ENCODE measurements at regions of chr15 and their contacts with region 1.

Region 1: DNA sequence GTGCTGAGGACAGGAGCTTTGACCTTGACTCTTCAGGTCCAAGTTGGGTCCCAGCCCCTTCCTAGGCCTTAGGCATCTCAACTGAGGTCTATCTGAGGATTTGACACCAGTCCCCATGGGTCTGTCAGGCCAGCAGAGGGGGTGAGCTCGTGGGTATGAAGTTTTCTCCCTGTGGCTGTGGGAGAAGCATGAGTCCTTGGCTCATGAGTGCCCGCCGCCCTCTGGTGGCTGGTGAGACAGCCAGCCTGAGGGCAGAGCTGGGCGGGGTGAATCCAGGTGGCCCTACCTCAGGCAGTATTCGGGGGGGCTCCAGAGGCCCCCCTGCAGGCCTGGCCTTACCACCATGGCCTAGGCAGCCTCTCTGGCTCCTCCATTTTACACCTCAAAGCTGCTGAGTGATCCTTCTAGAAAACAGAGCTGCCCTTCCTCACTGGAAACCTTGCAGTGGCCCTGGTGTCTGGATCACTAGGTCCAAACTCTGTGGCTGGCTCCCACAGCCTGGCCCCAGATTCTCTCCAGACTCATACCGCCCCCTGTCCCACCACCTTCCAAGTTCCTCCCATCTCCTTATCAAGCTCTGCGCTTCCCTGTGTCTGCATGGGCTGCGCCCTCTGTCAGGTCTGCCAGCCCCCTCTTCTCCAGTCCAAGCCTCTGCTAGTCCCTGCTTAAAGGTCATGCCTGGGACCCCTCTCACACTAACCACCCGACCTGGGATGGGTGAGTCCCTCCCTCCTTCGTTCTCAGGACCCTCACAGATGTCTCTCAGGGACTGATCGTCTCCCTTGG is 16.1 kb downstream of the SH2D7 start:
- DNase-seq: peak; percentile 94
- H3K4me3 Mint-ChIP-seq: no peak overlapping the region
- H3K27ac Mint-ChIP-seq: no peak overlapping the region
- H3K4me1 Mint-ChIP-seq: peaks cover 53% of the 10 kb centered on the region
- H3K27me3 Mint-ChIP-seq: no peaks in the 10 kb centered on the region

Region 2: GRCh38 chr15:77901974-77902750 is 206.3 kb before region 1 on chr15:
- intact Hi-C with region 1: no loop called
- DNase-seq: no peak
- H3K4me3 Mint-ChIP-seq: no peak overlapping the region
- H3K27ac Mint-ChIP-seq: no peak overlapping the region
- H3K4me1 Mint-ChIP-seq: no peaks in the 10 kb centered on the region
- H3K27me3 Mint-ChIP-seq: no peaks in the 10 kb centered on the region

Region 3: DNA sequence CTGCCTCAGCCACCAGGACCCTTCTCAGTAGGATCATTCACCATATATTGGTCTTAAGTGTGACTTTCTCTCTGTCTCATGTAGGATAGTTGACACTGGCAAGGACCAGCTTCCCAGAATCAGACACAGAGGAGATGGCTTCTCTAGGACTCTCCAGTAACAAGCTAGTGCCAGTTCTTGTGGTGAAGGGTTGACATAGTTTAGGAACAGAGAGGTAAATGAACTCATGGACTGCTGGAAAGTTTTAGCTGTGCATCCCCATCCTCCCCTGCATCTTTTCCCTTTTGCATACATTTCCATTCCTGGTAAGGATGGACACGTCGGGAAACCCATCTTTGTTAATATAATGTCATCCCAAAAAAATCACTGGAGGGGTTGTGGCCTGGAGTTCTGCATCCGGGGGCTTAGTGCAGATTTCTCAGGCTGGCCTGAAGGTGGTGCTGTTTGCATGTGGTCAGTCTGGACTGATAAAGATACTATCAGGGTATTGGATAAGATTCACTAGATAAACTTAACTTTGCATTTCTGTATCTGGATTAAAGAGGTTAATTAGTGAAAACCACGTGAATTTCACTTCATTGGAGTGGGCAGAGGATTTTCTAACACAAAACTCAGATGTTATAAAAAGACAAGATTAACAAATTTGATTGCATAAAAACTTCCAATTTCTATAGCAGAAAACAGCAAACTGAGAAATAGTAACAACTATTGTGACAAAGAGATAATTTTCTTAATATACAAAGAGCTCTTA is 141.8 kb before region 1 on chr15:
- intact Hi-C with region 1: loop called (anchors 1 kb)
- DNase-seq: peak; percentile 86
- H3K4me3 Mint-ChIP-seq: no peak overlapping the region
- H3K27ac Mint-ChIP-seq: peak overlapping the region; percentile 12
- H3K4me1 Mint-ChIP-seq: peaks cover 4% of the 10 kb centered on the region
- H3K27me3 Mint-ChIP-seq: peaks cover 45% of the 10 kb centered on the region

Region 4: GRCh38 chr15:77983708-77984445 is 124.6 kb before region 1 on chr15:
- intact Hi-C with region 1: no loop called
- DNase-seq: no peak
- H3K4me3 Mint-ChIP-seq: no peak overlapping the region
- H3K27ac Mint-ChIP-seq: no peak overlapping the region
- H3K4me1 Mint-ChIP-seq: no peaks in the 10 kb centered on the region
- H3K27me3 Mint-ChIP-seq: peaks cover 4% of the 10 kb centered on the region

Region 5: DNA sequence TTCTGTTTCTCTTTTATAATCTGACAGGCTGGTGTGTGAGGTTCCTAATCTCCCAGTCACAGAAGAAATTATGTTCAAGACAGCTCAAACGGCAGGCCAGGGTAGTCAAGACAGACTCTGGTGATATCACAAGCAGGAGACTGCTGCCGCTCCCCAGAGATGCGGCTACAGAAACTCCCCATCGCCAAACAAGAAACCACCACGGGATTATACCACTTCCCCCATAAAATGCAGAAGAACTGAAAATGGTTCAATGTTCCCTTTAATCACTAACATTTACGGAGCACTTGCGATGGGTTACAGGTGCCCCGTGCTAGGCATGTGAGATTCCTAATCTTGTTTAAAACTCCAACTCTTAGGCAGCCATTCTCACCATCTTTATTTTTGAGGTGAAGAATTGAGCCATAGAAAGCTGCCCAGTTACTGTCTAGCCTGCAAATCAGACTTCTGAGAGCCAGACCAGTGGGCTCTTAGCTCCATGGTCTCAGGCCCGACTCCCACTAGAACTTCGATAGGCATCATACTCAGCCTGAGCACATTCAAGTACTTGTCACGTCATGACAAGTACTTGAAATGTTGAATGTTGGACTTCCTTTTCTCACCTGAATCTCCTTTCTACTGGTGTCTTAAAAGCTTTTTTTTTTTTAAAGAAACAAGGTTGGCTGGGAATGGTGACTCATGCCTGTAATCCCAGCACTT is 89.4 kb before region 1 on chr15:
- intact Hi-C with region 1: loop called (anchors 5 kb)
- DNase-seq: peak; percentile 78
- H3K4me3 Mint-ChIP-seq: peak overlapping the region; percentile 32
- H3K27ac Mint-ChIP-seq: peak overlapping the region; percentile 30
- H3K4me1 Mint-ChIP-seq: peaks cover 25% of the 10 kb centered on the region
- H3K27me3 Mint-ChIP-seq: no peaks in the 10 kb centered on the region

Region 6: GRCh38 chr15:78065284-78065872 is 43.1 kb before region 1 on chr15:
- intact Hi-C with region 1: loop called (anchors 5 kb)
- DNase-seq: peak; percentile 74
- H3K4me3 Mint-ChIP-seq: no peak overlapping the region
- H3K27ac Mint-ChIP-seq: no peak overlapping the region
- H3K4me1 Mint-ChIP-seq: peaks cover 65% of the 10 kb centered on the region
- H3K27me3 Mint-ChIP-seq: no peaks in the 10 kb centered on the region

Region 7: DNA sequence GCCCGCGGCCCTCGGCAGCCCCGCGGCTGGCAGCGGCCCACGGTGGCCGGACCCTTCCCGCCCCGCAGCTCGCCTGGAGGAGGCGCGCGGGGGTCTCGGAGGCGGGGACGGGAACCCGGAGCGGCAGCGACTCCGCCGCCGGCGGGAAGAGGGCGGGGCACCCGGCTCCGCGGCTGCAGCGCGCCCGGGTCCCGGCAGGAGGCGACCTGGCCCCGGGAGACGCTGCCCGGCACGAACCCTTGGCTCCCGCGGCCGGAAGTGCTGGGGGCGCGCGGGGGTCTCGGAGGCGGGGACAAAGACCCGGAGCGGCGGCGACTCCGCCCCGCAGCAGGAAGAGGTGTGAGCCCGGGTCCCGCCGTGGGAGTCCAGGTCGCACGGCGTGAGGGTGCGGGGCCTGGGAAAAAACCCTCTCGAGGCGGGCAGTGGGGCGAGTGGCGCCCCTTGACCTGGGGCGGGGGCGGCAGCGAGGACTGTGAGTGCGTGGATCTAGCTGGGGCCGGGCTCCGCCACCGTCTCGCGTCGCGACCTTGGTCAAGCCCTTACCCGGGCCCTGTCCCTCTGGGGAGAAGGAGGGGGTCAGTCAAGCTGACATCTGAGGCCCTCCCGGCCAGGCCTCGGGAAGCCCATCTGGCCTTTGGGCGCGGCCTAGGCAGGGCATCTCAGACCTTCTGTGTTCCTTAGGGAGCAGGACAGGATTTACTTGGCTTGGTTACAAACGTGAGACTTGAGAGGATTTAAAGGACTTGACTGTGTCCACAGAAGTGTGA is 23.0 kb after region 1 on chr15 and contains the start of gene CIB2:
- intact Hi-C with region 1: no loop called
- DNase-seq: peak; percentile 96
- H3K4me3 Mint-ChIP-seq: peak within 1 kb of the TSS; percentile 84
- H3K27ac Mint-ChIP-seq: peak within 1 kb of the TSS; percentile 87
- H3K4me1 Mint-ChIP-seq: peaks cover 28% of the 10 kb centered on the region
- H3K27me3 Mint-ChIP-seq: no peaks in the 10 kb centered on the region
- total RNA-seq, gene CIB2: 1.2 and 1.5 TPM in 2 replicates

Region 8: DNA sequence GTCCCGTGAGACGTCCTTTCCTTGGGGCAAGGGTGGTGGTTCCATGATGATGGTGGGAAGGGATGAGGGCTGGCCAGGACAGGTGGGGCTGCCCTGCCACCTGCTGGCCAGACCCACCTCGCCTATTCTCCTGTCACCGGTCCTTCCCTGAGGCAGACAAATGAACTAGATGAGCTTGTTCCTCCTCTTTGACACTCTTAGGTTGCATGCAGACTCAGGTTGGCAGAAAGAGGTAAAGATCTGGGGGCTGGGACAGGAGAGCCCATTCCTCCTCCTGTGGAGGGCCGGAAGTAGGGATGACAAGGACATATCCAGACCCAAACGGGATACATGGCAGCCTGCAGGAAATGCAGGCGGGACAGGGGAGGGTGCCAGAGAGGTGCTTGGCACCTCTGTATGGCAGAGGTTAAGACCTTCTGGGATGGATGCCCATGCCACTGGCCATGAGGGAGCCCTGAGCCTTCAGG is 87.3 kb after region 1 on chr15:
- intact Hi-C with region 1: loop called (anchors 1 kb)
- DNase-seq: peak; percentile 85
- H3K4me3 Mint-ChIP-seq: no peak overlapping the region
- H3K27ac Mint-ChIP-seq: no peak overlapping the region
- H3K4me1 Mint-ChIP-seq: peaks cover 3% of the 10 kb centered on the region
- H3K27me3 Mint-ChIP-seq: peaks cover 9% of the 10 kb centered on the region

Measured in activated CD4-positive, alpha-beta T cell treated with anti-CD3 and anti-CD28 coated beads, Interleukin-2, amount 10 ng/mL, durations not matched to agents 24 days and 14 days (primary cell).